ENCODE measurements at regions of chr9 and their contacts with region 1.

Region 1: GRCh38 chr9:14156046-14156445 is 157.9 kb downstream of the NFIB start:
- DNase-seq: no peak
- ATAC-seq: no peak
- H3K4me3 ChIP-seq: no peak overlapping the region
- H3K27ac ChIP-seq: peak overlapping the region in 6 of 12 donors; percentile 2 to 33 (median 15)
- H3K4me1 ChIP-seq: peaks cover 4 to 96% (median 54%) of the 10 kb centered on the region in 12 donors
- H3K27me3 ChIP-seq: no peaks in the 10 kb centered on the region
- CTCF ChIP-seq: no peak
- POLR2A ChIP-seq: no peak

Region 2: DNA sequence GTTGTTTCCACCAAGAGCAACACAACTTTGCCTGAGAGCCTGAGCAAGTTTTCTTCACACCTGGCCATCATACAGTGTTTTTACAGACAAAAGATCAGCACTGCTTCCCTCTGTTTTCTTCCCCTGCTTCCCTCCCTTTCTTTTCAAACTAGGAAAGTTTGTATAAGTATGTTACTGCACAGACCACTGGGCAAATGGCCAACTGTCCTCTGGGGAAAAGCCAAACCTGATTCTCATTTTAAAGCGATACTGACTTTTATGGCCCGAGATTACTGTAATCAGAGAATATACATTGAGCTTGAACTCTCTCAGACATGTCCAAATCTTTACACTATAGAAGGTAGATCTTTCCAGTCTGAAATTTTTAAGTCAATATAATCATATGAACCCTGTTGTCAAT is 257.1 kb before region 1 on chr9:
- intact Hi-C with region 1: loop called in 1 of 10 experiments (anchors 5 kb)
- DNase-seq: peak in 4 of 5 donors; percentile 30 to 44 (median 36)
- ATAC-seq: no peak
- H3K4me3 ChIP-seq: no peak overlapping the region
- H3K27ac ChIP-seq: peak overlapping the region in 11 of 12 donors; percentile 42 to 84 (median 66)
- H3K4me1 ChIP-seq: peaks cover 6 to 66% (median 24%) of the 10 kb centered on the region in 12 donors
- H3K27me3 ChIP-seq: no peaks in the 10 kb centered on the region
- CTCF ChIP-seq: no peak
- POLR2A ChIP-seq: no peak

Region 3: GRCh38 chr9:14119694-14120514 is 36.1 kb before region 1 on chr9:
- intact Hi-C with region 1: loop called in 1 of 10 experiments (anchors 10 kb)
- DNase-seq: no peak
- ATAC-seq: no peak
- H3K4me3 ChIP-seq: no peak overlapping the region
- H3K27ac ChIP-seq: no peak overlapping the region
- H3K4me1 ChIP-seq: no peaks in the 10 kb centered on the region
- H3K27me3 ChIP-seq: no peaks in the 10 kb centered on the region
- CTCF ChIP-seq: no peak
- POLR2A ChIP-seq: no peak

Region 4: GRCh38 chr9:14212077-14212476 is 56.0 kb after region 1 on chr9:
- intact Hi-C with region 1: loop called in 1 of 10 experiments (anchors 5 kb)
- DNase-seq: no peak
- ATAC-seq: no peak
- H3K4me3 ChIP-seq: no peak overlapping the region
- H3K27ac ChIP-seq: peak overlapping the region in 4 of 12 donors; percentile 8 to 54 (median 18)
- H3K4me1 ChIP-seq: peaks cover 4 to 92% (median 68%) of the 10 kb centered on the region in 12 donors
- H3K27me3 ChIP-seq: no peaks in the 10 kb centered on the region
- CTCF ChIP-seq: no peak
- POLR2A ChIP-seq: no peak

Region 5: GRCh38 chr9:14226855-14227532 is 70.9 kb after region 1 on chr9:
- intact Hi-C with region 1: no loop called
- DNase-seq: no peak
- ATAC-seq: no peak
- H3K4me3 ChIP-seq: no peak overlapping the region
- H3K27ac ChIP-seq: peak overlapping the region in 2 of 12 donors; percentile 19 to 21
- H3K4me1 ChIP-seq: peaks cover 0 to 57% (median 21%) of the 10 kb centered on the region in 12 donors
- H3K27me3 ChIP-seq: no peaks in the 10 kb centered on the region
- CTCF ChIP-seq: no peak
- POLR2A ChIP-seq: no peak

Region 6: GRCh38 chr9:14238552-14238951 is 82.5 kb after region 1 on chr9:
- intact Hi-C with region 1: loop called in 3 of 10 experiments (anchors 5 to 10 kb)
- DNase-seq: no peak
- ATAC-seq: peak; percentile 47 to 90 (median 72)
- H3K4me3 ChIP-seq: no peak overlapping the region
- H3K27ac ChIP-seq: peak overlapping the region in 11 of 12 donors; percentile 34 to 81 (median 72)
- H3K4me1 ChIP-seq: peaks cover 18 to 91% (median 67%) of the 10 kb centered on the region in 12 donors
- H3K27me3 ChIP-seq: no peaks in the 10 kb centered on the region
- CTCF ChIP-seq: no peak
- POLR2A ChIP-seq: no peak

Region 7: GRCh38 chr9:14245901-14246525 is 90.0 kb after region 1 on chr9:
- intact Hi-C with region 1: loop called in 2 of 10 experiments (anchors 10 kb)
- DNase-seq: no peak
- ATAC-seq: no peak
- H3K4me3 ChIP-seq: no peak overlapping the region
- H3K27ac ChIP-seq: peak overlapping the region in 1 of 12 donors; percentile 7
- H3K4me1 ChIP-seq: peaks cover 3 to 92% (median 59%) of the 10 kb centered on the region in 12 donors
- H3K27me3 ChIP-seq: no peaks in the 10 kb centered on the region
- CTCF ChIP-seq: no peak
- POLR2A ChIP-seq: no peak